Left cardiac atrium (tissue), 4 donors: ENCODE measurements at regions of chr2 and their contacts with region 1.

Region 1: GRCh38 chr2:33457556-33458247 is 18.7 kb upstream of the RASGRP3 start:
- DNase-seq: peak; percentile 38
- ATAC-seq: peak; percentile 92 to 93

Region 2: DNA sequence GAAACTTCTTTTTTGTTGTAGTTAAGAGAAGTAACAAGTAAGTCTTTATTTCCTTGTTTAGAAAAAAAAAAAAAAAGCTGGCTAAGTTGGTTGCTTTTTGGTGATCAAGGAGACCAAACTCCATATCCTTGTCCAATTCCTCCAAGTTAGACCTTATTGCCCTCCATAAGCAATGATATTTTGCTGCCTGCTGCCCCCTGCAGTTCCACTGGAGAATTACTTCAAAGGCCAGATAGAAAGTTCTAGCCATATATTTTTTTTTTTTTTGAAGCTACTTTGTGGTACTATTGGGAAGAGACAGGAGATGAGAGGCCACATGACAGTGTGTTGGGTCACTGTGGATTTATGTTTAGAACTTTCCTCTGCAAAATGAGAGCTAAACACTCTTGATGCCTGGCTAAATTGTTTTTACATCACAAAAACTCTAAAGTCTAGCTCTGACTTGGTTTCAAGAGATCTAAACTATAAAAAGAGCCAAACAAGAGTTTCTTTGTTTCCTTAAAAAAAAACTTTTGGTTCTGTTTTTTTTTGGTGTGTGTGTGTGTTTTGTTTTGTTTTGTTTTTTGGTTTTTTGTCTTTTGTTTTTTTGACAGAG is 62.0 kb before region 1 on chr2:
- intact Hi-C with region 1: no loop called
- DNase-seq: no peak
- ATAC-seq: peak; percentile 21 to 49

Region 3: DNA sequence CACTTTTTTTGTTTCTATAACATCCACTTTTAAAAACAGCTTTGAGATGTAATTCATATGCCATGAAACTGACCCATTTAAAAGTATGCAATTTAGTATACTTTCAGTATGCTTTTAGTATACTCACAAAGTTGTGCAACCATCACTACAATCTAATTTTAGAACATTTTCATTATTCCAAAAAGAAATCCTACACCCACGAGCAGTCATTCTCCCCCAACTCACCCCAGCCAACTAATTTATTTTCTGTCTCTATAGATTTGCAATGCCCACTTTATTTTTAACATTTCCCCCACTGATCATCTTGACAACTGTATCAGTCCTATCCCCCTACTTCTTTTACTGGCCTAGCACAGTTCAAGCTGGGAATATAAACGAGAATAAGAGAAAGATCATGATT is 102.3 kb after region 1 on chr2:
- intact Hi-C with region 1: loop called in 1 of 2 experiments (anchors 10 kb)
- DNase-seq: no peak
- ATAC-seq: no peak